Left cardiac atrium (tissue), 4 donors: ENCODE measurements at regions of chr21 and their contacts with region 1.

Region 1: DNA sequence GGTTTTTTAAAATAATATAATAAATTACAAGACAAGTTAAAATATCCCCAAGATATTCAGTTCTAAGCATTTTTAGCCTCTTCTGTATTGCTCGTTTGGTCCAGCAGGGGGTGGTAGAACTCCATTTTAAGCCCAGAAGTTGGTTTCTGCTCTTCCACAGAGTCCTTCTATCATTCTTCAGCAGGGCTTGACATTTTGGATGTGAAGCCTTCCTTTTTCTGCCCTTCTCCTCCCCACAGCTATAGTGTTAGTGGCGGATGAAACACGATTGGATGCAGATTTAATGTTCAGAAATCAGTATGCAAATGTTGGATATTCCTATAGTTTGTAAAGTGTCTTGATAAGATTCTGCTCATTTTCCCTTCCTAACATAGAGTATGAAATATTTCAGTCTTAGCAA is 1.4 kb downstream of the NCAM2 start:
- DNase-seq: no peak
- ATAC-seq: peak; percentile 48 to 50

Region 2: GRCh38 chr21:21101911-21102310 is 102.3 kb after region 1 on chr21:
- intact Hi-C with region 1: loop called in 1 of 2 experiments (anchors 5 kb)
- DNase-seq: no peak
- ATAC-seq: peak in 1 of 2 donors; percentile 43

Region 3: DNA sequence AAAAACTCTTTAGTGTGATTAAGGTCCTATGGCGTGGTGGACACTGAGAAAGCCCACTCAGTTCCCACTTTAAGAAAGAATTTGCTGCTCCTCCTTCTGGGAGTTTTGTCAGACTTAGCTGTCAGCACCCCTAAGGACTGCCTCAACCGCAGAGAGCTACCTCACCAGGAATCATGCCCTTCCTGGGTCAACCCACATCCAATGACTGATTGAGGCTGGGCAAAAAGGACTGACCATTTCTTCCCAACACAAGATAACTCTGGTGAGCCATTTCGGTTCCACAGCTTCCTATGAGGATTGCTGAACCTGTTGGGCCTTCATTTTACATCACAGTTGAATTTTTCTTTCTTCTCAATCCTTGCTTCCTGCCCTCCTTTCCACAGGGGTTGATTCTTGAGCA is 196.4 kb after region 1 on chr21:
- intact Hi-C with region 1: no loop called
- DNase-seq: no peak
- ATAC-seq: no peak

Region 4: DNA sequence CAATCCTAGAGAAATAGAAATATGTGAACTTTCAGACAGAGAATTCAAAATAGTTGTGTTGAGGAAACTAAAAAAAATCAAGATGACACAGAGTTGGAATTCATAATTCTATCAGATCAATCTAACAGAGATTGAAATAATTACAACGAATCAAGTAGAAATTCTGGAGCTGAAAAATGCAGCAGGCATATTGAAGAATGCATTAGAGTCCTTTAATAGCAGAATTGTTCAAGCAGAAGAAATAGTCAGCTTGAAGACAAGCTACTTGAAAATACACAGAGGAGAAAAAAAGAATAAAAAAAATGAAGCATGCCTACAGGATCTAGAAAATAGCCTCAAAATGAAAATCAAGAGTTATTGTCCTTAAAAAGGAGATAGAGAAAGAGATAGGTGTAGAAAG is 345.6 kb after region 1 on chr21:
- intact Hi-C with region 1: no loop called
- DNase-seq: no peak
- ATAC-seq: no peak

Region 5: GRCh38 chr21:21921421-21922232 is 922.0 kb after region 1 on chr21:
- intact Hi-C with region 1: loop called in 1 of 2 experiments (anchors 5 kb)
- DNase-seq: no peak
- ATAC-seq: no peak

Region 6: GRCh38 chr21:22791986-22792560 is 1792.4 kb after region 1 on chr21:
- intact Hi-C with region 1: loop called in 1 of 2 experiments (anchors 2 kb)
- DNase-seq: no peak
- ATAC-seq: no peak